ENCODE measurements at regions of chr17 and their contacts with region 1.

Region 1: GRCh38 chr17:36849871-36850348 is 87.4 kb upstream of the LHX1 start:
- DNase-seq: peak in 1 of 2 experiments; percentile 54
- H3K4me3 ChIP-seq: no peak overlapping the region
- H3K27ac ChIP-seq: peak overlapping the region; percentile 57
- H3K4me1 ChIP-seq: peaks cover 26% of the 10 kb centered on the region
- H3K27me3 ChIP-seq: peaks cover 2% of the 10 kb centered on the region; the same call in 1 of the 2 replicates
- CTCF ChIP-seq: peak; percentile 40

Region 2: GRCh38 chr17:36816214-36816906 is 33.5 kb before region 1 on chr17:
- CTCF ChIA-PET with region 1: no interaction called
- POLR2A ChIA-PET with region 1: no interaction called
- intact Hi-C with region 1: no loop called
- DNase-seq: no peak
- H3K4me3 ChIP-seq: no peak overlapping the region
- H3K27ac ChIP-seq: no peak overlapping the region
- H3K4me1 ChIP-seq: no peaks in the 10 kb centered on the region
- H3K27me3 ChIP-seq: peaks cover 44% of the 10 kb centered on the region; the same call in 1 of the 2 replicates
- CTCF ChIP-seq: no peak

Region 3: DNA sequence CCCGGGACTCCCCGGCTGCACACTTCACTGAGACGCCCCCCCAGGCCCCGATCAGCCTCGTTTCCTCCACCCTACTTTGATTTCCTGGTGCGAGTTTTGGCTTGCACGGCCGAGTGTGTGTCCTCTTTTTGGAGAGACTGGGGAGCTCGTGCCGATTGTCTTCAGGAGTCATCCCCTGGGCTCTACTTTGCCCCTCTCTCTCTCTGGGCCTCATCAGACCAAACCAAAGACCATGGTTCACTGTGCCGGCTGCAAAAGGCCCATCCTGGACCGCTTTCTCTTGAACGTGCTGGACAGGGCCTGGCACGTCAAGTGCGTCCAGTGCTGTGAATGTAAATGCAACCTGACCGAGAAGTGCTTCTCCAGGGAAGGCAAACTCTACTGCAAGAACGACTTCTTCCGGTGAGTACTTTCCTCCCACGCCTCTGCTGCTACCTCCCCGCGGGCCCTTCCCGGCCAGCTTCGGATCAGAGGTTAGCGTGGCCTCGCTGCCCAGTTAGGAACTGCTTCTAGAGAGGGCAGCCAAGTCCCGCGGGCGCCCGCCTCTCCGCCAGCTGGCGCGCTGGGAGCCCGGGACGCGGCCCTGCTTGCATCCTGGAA is 88.2 kb after region 1 on chr17:
- CTCF ChIA-PET with region 1: interaction called, 3 read pairs
- POLR2A ChIA-PET with region 1: no interaction called
- intact Hi-C with region 1: loop called (anchors 2 kb)
- DNase-seq: peak; percentile 53 to 68
- H3K4me3 ChIP-seq: peak overlapping the region; percentile 82
- H3K27ac ChIP-seq: 0 out of 2 replicates have a peak overlapping the region, but pooled peaks have one; percentile 8
- H3K4me1 ChIP-seq: peaks cover 14% of the 10 kb centered on the region
- H3K27me3 ChIP-seq: no peaks in the 10 kb centered on the region
- CTCF ChIP-seq: no peak